Posterior cingulate gyrus (tissue), 11 donors: ENCODE measurements at regions of chr13 and their contacts with region 1.

Region 1: DNA sequence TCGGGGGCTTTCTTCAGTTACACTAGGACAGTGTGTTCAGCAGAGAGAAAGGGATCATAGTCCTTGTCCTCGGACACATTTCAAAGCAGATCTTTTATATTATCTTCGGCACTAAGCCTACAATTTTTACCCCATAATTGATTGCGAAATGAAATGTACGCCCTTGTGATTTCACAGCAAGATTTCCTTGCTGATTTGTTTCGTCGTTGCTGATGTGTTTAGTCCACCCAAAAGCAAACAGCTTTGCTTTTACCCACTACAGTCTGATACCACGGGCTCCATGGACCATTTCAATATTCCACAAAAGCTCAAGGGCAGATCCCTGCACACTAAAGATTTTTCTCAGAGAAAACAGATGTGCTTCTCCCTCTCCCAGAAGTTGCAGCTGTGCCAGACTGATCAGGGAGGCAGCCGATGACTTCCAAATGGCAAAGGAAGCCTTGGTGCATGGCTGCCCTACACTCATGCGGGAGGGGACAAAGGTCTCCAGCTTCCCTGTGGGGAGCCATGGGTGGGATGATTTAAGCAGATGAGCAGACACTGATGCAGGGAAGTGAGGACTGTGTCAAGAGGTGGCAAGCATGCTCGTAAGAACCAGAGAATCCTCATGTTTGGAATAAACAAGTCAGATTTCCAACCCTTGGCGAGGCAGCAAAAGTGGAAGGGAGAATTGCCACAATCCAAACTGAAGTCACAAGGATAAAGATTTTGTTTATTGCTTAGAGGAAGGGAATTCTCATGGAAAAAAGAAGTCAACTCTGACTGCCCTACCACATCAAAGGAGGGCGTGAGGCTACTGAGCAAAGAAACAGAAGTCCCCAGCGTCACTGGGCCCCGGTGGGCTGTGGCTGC is 81.1 kb downstream of the STK24 start:
- DNase-seq: no peak

Region 2: GRCh38 chr13:98565726-98566565 is 70.1 kb after region 1 on chr13:
- intact Hi-C with region 1: loop called (anchors 10 kb)
- DNase-seq: peak in 4 of 10 donors; percentile 20 to 88 (median 79)